Right cardiac atrium (tissue), 5 donors: ENCODE measurements at regions of chr2 and their contacts with region 1.

Region 1: GRCh38 chr2:44715671-44716081 is 225.8 kb upstream of the SIX3 start:
- DNase-seq: no peak
- ATAC-seq: no peak
- H3K4me3 ChIP-seq: no peak overlapping the region
- H3K27ac ChIP-seq: no peak overlapping the region
- H3K4me1 ChIP-seq: no peaks in the 10 kb centered on the region
- H3K27me3 ChIP-seq: no peaks in the 10 kb centered on the region

Region 2: DNA sequence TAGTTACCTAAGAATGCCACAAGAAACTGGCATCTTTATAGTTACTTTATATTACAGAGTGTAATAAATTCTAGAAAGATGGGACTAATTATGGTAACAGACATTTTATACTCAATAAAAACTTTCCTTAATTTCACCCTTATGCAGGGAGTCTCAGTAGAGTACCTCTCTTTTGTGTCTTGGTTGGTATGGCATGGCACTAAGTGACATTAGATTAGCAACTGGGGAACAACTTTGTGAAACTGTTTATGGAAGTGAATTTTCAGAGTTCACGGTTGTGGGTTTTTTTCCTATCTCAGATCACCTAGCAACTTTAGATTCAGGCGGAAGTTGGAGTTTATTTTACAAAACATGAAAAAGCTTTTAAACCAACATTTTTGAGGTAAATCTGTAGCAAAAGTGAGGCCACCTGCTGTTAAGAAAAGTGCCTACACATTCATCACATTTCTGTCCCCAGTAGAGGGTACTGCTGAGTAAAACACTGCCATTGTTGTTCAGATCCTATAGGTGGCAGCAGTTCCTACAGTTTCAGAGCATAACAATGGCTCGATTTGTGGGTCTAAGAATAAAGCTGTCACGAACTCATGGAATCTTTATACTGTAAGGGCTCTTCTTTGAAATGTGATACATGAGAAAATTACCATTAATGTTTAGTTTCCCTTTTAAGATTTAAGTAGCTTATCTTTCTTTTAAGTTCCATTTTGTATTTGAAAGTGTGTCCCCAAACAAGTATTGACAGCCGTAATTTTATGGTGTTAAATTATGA is 236.4 kb before region 1 on chr2:
- intact Hi-C with region 1: loop called in 1 of 4 experiments (anchors 10 kb)
- DNase-seq: no peak
- ATAC-seq: peak; percentile 89 to 91
- H3K4me3 ChIP-seq: no peak overlapping the region
- H3K27ac ChIP-seq: no peak overlapping the region
- H3K4me1 ChIP-seq: no peaks in the 10 kb centered on the region
- H3K27me3 ChIP-seq: no peaks in the 10 kb centered on the region

Region 3: GRCh38 chr2:44623622-44624351 is 91.9 kb before region 1 on chr2:
- intact Hi-C with region 1: no loop called
- DNase-seq: no peak
- ATAC-seq: no peak
- H3K4me3 ChIP-seq: no peak overlapping the region
- H3K27ac ChIP-seq: no peak overlapping the region
- H3K4me1 ChIP-seq: no peaks in the 10 kb centered on the region
- H3K27me3 ChIP-seq: no peaks in the 10 kb centered on the region

Region 4: GRCh38 chr2:44649381-44649780 is 66.3 kb before region 1 on chr2:
- intact Hi-C with region 1: no loop called
- DNase-seq: no peak
- ATAC-seq: no peak
- H3K4me3 ChIP-seq: no peak overlapping the region
- H3K27ac ChIP-seq: no peak overlapping the region
- H3K4me1 ChIP-seq: no peaks in the 10 kb centered on the region
- H3K27me3 ChIP-seq: no peaks in the 10 kb centered on the region